Activated naive CD4-positive, alpha-beta T cell treated with anti-CD3 and anti-CD28 coated beads for 36 hours (primary cell): ENCODE measurements at regions of chr14 and their contacts with region 1.

Region 1: DNA sequence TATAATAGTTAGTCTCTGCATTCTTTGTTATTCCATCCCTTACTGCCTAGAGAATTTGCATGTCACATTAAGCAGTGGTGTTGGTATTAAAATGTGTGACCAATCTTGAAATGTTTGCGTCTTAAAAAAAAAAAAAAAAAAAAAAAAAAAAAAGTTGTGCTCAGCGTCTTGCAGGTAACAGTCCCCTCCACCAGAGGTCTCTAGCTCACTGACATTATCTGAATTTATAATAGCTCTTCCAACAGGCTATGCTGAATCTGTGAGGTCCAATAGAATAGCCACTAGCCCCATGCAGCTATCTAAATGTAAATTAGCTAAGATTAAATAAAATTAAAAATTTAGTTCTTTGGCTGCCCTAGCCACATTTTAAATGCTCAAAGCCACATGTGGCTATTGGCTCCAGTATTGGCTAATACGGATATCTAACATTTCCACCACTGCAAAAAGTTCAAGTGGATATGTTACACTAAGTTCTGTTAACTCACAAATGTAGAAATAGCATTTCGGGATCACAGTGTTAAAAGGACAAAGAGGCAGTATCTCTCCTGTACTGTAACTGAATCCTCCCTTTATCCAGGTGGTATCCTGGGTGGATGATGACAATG is 28.7 kb downstream of the NKX2-8 start:
- DNase-seq: peak; percentile 21
- H3K4me3 Mint-ChIP-seq: no peak overlapping the region
- H3K27ac Mint-ChIP-seq: no peak overlapping the region
- H3K4me1 Mint-ChIP-seq: no peaks in the 10 kb centered on the region
- H3K27me3 Mint-ChIP-seq: peaks cover 1% of the 10 kb centered on the region

Region 2: GRCh38 chr14:35883677-35884293 is 670.0 kb before region 1 on chr14:
- CTCF ChIA-PET with region 1: no interaction called
- intact Hi-C with region 1: loop called (anchors 2 kb)
- DNase-seq: peak; percentile 55
- H3K4me3 Mint-ChIP-seq: no peak overlapping the region
- H3K27ac Mint-ChIP-seq: no peak overlapping the region
- H3K4me1 Mint-ChIP-seq: no peaks in the 10 kb centered on the region
- H3K27me3 Mint-ChIP-seq: peaks cover 2% of the 10 kb centered on the region

Region 3: GRCh38 chr14:36241183-36241582 is 312.6 kb before region 1 on chr14:
- CTCF ChIA-PET with region 1: no interaction called
- intact Hi-C with region 1: loop called (anchors 10 kb)
- DNase-seq: no peak
- H3K4me3 Mint-ChIP-seq: no peak overlapping the region
- H3K27ac Mint-ChIP-seq: no peak overlapping the region
- H3K4me1 Mint-ChIP-seq: no peaks in the 10 kb centered on the region
- H3K27me3 Mint-ChIP-seq: peaks cover 20% of the 10 kb centered on the region

Region 4: DNA sequence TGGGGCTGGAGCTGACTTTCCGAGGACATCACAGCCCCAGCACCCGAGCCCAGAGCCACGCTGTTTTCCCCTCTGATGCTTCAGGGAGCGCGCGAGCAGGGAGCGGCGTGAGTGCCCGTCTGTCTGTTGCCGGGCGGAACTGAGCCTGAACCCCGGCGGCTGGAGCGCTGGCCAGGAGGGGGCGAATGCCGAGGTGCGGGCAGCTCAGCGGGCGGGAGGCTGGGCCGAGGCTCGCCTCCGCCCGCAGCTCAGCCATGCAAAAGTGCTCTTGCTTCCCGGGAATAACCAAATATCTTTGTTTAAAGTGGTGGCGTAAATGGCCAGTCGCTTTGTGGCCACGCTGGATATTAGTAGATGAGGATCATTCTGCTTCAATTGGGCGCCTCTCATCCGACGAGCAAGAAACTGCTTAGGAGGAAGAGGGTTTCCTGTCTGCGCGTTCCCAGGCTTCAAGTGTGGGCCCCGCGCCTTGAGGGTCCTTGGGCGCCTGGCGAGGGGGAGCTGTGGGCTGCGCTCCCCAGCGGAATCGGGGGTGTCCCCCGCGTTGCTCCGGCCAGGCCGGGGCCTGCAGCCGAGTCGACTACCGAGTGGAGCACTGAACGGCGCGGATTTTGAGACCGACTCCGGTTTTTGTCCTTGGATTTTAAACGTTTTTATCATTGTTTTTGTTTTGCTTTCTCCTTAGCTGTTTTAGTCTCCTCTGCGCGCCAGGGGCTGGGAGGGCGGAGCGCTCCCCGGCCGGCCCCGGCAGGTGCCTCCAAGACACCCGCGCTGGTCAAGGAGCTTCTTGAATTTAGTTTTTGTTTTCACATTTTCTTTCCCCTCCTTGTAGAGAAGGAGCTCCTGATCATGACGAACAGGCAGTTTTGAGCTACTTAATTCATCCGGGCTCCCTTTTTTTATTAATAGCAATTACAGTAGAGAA is 32.9 kb before region 1 on chr14:
- CTCF ChIA-PET with region 1: interaction called, 30 read pairs
- intact Hi-C with region 1: no loop called
- DNase-seq: no peak
- H3K4me3 Mint-ChIP-seq: no peak overlapping the region
- H3K27ac Mint-ChIP-seq: no peak overlapping the region
- H3K4me1 Mint-ChIP-seq: peaks cover 23% of the 10 kb centered on the region
- H3K27me3 Mint-ChIP-seq: peaks cover 71% of the 10 kb centered on the region

Region 5: DNA sequence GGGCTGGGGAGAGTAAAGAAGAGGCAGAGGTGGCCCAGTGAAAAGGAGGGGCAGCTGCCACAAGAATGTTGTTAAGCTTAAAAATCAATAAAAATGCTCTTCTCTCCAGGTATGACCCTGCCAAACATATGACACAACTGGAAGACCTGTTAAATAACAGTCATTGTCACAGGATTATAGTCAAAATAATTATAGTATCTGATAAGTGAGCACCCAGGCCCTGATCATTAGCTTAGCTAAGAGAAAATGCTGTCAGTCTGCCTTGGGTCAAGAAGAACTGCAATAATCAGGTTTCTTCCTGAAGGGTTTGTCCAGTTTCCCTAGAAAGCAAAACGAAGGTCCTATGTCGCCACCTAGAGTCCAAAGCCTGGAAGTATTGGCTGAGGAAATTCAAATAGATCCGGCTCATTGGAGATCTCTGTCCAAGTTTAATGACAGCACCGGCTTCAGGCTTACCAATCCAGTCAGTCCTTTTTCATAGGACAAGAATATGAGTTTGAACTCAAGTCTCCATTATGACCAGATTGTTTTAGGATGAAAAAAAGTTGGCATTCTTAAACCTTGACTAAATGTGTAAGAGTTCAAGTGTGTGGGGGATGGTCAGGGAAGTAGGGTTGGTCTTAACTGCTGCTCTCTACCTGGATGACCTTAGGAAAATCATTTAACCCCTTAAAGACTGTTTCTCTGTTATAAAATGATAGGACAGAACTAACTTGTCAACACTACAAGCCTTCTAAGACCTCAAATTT is 51.2 kb after region 1 on chr14:
- CTCF ChIA-PET with region 1: interaction called, 41 read pairs
- intact Hi-C with region 1: loop called (anchors 1 kb)
- DNase-seq: peak; percentile 69
- H3K4me3 Mint-ChIP-seq: no peak overlapping the region
- H3K27ac Mint-ChIP-seq: no peak overlapping the region
- H3K4me1 Mint-ChIP-seq: no peaks in the 10 kb centered on the region
- H3K27me3 Mint-ChIP-seq: peaks cover 13% of the 10 kb centered on the region

Region 6: DNA sequence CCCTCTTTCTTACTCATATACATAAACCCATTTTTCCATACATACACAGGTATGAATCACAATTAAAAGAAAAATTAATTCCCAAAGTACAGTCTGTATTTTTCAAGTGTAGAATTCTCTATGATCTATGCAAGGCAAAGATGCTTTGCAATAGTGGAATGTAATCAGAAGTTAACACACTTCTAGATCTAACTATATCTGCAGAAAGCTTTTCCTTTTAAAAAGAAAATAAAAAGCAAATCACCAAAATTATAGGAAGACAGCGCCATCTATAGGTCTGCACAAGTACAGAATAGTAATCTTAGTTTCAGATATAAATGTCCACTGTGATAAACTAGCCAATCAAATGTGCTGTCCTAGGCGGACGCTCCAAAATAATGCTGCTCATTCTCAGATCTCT is 596.7 kb after region 1 on chr14:
- CTCF ChIA-PET with region 1: no interaction called
- intact Hi-C with region 1: loop called (anchors 1 kb)
- DNase-seq: no peak
- H3K4me3 Mint-ChIP-seq: no peak overlapping the region
- H3K27ac Mint-ChIP-seq: no peak overlapping the region
- H3K4me1 Mint-ChIP-seq: no peaks in the 10 kb centered on the region
- H3K27me3 Mint-ChIP-seq: peaks cover 1% of the 10 kb centered on the region